SK-N-SH (cell line): ENCODE measurements at regions of chr17 and their contacts with region 1.

Region 1: GRCh38 chr17:1908699-1909309 is 79.0 kb downstream of the RPA1 start:
- DNase-seq: peak; percentile 91
- H3K4me3 ChIP-seq: peak overlapping the region in 1 of 2 experiments; percentile 48; a peak in 2 of 4 replicates
- H3K27ac ChIP-seq: no peak overlapping the region
- H3K4me1 ChIP-seq: peaks cover 0 to 19% of the 10 kb centered on the region in 2 experiments; a peak in 1 of 4 replicates
- H3K27me3 ChIP-seq: peaks cover 7% of the 10 kb centered on the region; the same call in 1 of the 2 replicates
- CTCF ChIP-seq: peak; percentile 73
- EP300 ChIP-seq: no peak
- RAD21 ChIP-seq: peak; percentile 97

Region 2: GRCh38 chr17:1882836-1883235 is 26.0 kb before region 1 on chr17:
- CTCF ChIA-PET with region 1: interaction called, 29 read pairs
- POLR2A ChIA-PET with region 1: no interaction called
- DNase-seq: peak; percentile 49
- H3K4me3 ChIP-seq: no peak overlapping the region; a peak in 1 of 4 replicates
- H3K27ac ChIP-seq: no peak overlapping the region
- H3K4me1 ChIP-seq: no peaks in the 10 kb centered on the region
- H3K27me3 ChIP-seq: no peaks in the 10 kb centered on the region
- CTCF ChIP-seq: peak; percentile 57
- EP300 ChIP-seq: no peak
- RAD21 ChIP-seq: peak; percentile 66

Region 3: GRCh38 chr17:1920948-1921351 is 12.1 kb after region 1 on chr17:
- CTCF ChIA-PET with region 1: interaction called, 17 read pairs
- POLR2A ChIA-PET with region 1: no interaction called
- DNase-seq: no peak
- H3K4me3 ChIP-seq: no peak overlapping the region
- H3K27ac ChIP-seq: no peak overlapping the region
- H3K4me1 ChIP-seq: no peaks in the 10 kb centered on the region
- H3K27me3 ChIP-seq: no peaks in the 10 kb centered on the region
- CTCF ChIP-seq: no peak
- EP300 ChIP-seq: no peak
- RAD21 ChIP-seq: no peak

Region 4: GRCh38 chr17:1999557-2000251 is 90.9 kb after region 1 on chr17:
- CTCF ChIA-PET with region 1: interaction called, 10 read pairs
- POLR2A ChIA-PET with region 1: no interaction called
- DNase-seq: peak; percentile 51
- H3K4me3 ChIP-seq: no peak overlapping the region
- H3K27ac ChIP-seq: peak overlapping the region in 1 of 2 experiments; percentile 7; a peak in 1 of 4 replicates
- H3K4me1 ChIP-seq: peaks cover 0 to 37% of the 10 kb centered on the region in 2 experiments; a peak in 1 of 4 replicates
- H3K27me3 ChIP-seq: no peaks in the 10 kb centered on the region
- CTCF ChIP-seq: no peak
- EP300 ChIP-seq: 0 out of 4 replicates have a peak, but pooled peaks of 1 of the 2 experiments have one; percentile 2
- RAD21 ChIP-seq: no peak

Region 5: GRCh38 chr17:2017274-2017941 is 108.6 kb after region 1 on chr17:
- CTCF ChIA-PET with region 1: interaction called, 197 read pairs
- POLR2A ChIA-PET with region 1: no interaction called
- DNase-seq: no peak
- H3K4me3 ChIP-seq: no peak overlapping the region
- H3K27ac ChIP-seq: no peak overlapping the region
- H3K4me1 ChIP-seq: no peaks in the 10 kb centered on the region
- H3K27me3 ChIP-seq: peaks cover 28% of the 10 kb centered on the region
- CTCF ChIP-seq: no peak
- EP300 ChIP-seq: no peak
- RAD21 ChIP-seq: no peak

Region 6: DNA sequence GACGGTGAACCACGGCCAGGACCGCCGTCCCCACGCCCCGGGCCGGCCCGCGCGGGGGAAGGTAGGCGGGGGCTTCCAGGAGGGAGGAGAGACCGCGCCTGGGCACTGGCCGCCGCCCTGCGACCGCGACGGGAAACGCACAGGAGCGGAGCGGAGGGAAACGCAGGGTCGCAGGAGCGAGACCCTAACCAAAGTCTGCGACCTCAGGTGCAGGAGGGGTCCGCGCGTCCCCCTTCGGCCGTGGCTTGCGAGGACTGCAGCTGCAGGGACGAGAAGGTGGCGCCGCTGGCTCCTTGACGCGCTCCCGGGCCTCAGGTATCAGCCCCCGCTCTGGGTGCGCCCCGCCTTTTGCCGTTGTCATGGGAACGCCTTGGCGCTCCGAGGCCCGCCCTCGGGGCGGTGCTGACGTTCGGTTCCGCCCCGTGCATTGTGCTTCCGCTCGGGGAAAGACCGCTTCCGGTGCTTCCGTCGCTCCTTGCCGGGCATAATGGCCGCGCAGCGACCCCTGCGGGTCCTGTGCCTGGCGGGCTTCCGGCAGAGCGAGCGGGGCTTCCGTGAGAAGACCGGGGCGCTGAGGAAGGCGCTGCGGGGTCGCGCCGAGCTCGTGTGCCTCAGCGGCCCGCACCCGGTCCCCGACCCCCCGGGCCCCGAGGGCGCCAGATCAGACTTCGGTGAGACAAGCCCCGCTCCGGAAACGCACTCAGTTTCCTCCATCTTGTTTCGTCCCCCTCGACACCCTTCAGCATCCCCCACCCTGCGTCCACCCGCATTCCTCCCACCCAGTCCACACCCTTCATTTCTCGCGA is 133.0 kb after region 1 on chr17 and contains the start of gene OVCA2:
- CTCF ChIA-PET with region 1: interaction called, 19 read pairs
- POLR2A ChIA-PET with region 1: interaction called, 4 read pairs
- DNase-seq: peak; percentile 97
- H3K4me3 ChIP-seq: peak within 1 kb of the TSS; percentile 71 to 81
- H3K27ac ChIP-seq: peak within 1 kb of the TSS; percentile 79 to 92
- H3K4me1 ChIP-seq: peaks cover 20 to 21% of the 10 kb centered on the region in 2 experiments; a peak in 3 of 4 replicates
- H3K27me3 ChIP-seq: no peaks in the 10 kb centered on the region
- CTCF ChIP-seq: peak; percentile 26; the same call in 1 of the 2 replicates
- EP300 ChIP-seq: no peak
- RAD21 ChIP-seq: peak; percentile 49
- polyA plus RNA-seq, gene OVCA2: 58.1 and 59.2 TPM in 2 replicates